ENCODE measurements at regions of chrX and their contacts with region 1.

Region 1: DNA sequence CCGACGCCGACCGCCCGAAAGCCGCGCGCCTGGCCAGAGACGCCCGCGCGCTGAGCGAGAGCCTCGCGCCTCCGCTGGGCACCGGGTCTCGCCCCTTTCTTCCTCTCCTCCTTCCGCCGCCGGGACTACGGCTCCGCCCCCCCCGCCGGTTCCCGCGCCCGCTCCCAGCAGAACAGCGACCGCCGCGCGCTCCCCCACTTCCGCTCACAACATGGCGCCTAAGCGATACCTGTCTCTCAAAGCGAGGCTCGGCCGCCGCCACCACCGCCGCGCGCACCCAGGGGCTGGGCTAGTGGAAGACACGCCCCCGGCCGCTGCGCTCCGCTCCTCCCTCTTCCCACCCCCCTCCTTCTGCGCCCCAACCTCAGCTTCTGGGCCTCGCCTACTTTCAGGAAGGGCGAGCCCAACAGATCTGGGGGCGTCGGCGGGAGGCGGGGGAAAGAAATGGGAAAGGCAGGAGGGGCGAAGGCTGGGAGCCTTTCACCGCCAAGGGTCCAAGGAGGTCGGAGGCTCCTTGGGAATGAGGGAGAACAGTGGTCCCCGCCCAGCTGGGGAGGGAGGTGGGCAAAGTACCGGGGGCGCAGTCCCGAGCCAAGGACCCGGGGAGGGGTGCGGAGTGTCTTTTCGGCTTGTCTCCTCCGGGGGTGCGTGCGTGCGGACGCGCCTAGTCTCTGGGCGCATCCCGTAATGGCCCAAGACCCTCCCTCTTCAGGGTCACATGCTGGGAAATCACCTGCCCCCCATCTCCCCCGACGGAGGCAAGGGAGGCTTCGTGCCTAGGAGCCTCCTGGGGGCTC is at the start of gene RPS6KA3:
- DNase-seq: peak; percentile 83
- H3K4me3 ChIP-seq: peak within 1 kb of the TSS; percentile 69 to 81 (median 73)
- H3K27ac ChIP-seq: peak within 1 kb of the TSS; percentile 75
- H3K4me1 ChIP-seq: peaks cover 23% of the 10 kb centered on the region
- H3K27me3 ChIP-seq: no peaks in the 10 kb centered on the region
- CTCF ChIP-seq: no peak
- POLR2A ChIP-seq: no peak
- total RNA-seq, gene RPS6KA3: 61.6 and 63.6 TPM in 2 replicates

Region 2: DNA sequence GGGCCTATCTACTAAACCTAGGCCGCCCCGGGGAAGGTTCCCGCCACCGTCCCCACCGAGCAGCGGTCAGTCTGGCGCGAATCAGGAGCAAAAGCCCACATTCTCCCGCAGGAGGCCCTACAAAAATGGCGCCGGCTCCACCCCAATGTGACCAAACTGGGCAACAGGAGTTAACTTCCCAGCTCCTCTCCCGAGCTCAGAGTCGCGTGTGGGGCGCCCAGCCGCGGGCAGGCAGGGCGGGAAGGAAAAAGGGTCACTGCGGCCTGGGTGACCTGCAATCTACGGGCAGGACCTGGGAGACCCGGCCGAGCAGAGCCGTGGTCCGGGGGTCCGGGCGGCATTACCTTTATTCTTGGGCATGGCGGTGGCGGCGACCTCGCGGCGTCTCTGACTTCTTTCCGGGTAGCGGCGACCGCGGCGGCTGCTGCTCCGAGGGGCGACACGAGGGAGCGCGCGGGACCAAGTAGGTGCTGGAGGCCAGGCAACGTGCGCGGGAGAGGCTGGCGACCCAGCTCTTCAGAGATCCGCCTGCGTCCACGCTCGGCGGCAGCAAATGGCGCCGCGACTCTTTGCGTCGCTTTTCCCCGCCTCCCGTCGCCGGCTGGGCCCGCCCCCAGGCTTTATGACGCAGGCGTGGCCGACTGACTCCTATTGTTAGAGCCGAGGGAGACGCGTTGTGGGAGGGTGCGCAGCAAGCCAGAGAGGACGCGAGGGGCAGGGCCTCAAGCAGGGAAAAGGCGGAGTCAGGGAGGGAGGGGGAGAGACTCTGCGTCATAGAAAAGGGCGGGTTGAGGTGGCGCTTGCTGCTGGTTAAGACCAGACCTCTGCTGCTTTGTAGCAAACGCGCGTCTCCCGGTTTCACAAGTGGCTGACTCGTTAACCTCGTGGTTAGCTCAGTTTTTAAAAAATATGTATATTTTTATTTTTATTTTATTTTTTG is 125.5 kb before region 1 on chrX and contains the start of gene EIF1AX:
- CTCF ChIA-PET with region 1: no interaction called
- POLR2A ChIA-PET with region 1: no interaction called
- dilution Hi-C with region 1: no loop called
- intact Hi-C with region 1: loop called (anchors 5 kb)
- DNase-seq: peak; percentile 98
- H3K4me3 ChIP-seq: peak within 1 kb of the TSS; percentile 55 to 87 (median 69)
- H3K27ac ChIP-seq: peak within 1 kb of the TSS; percentile 56
- H3K4me1 ChIP-seq: peaks cover 22% of the 10 kb centered on the region
- H3K27me3 ChIP-seq: no peaks in the 10 kb centered on the region
- CTCF ChIP-seq: no peak
- POLR2A ChIP-seq: peak; percentile 46
- total RNA-seq, gene EIF1AX: 89.4 and 94.7 TPM in 2 replicates

Region 3: DNA sequence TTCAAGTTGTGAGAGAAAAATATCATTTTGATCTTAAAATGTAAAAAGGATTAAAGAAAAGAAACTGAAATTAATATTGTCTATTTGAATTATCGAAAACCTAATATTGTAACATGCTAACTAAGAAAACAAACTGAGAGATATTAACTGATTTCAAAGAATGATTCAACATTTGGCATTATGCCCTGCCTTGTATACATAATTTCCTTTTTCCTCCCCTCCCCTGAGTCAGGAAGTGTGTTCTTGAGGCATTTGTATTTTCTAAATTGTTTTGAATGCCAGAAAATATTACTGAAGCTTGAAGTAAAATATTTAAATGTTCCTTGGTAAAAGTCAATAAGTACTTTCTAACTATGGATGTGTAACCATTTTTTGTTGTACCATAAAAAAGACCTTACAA is 49.7 kb before region 1 on chrX:
- CTCF ChIA-PET with region 1: no interaction called
- POLR2A ChIA-PET with region 1: no interaction called
- dilution Hi-C with region 1: no loop called
- intact Hi-C with region 1: loop called (anchors 1 kb)
- DNase-seq: peak; percentile 82
- H3K4me3 ChIP-seq: peak overlapping the region in 2 of 3 experiments; percentile 37 to 95
- H3K27ac ChIP-seq: peak overlapping the region; percentile 78
- H3K4me1 ChIP-seq: peaks cover 24% of the 10 kb centered on the region
- H3K27me3 ChIP-seq: no peaks in the 10 kb centered on the region
- CTCF ChIP-seq: no peak
- POLR2A ChIP-seq: no peak

Region 4: GRCh38 chrX:20230406-20230805 is 36.6 kb before region 1 on chrX:
- CTCF ChIA-PET with region 1: no interaction called
- POLR2A ChIA-PET with region 1: no interaction called
- dilution Hi-C with region 1: no loop called
- intact Hi-C with region 1: no loop called
- DNase-seq: no peak
- H3K4me3 ChIP-seq: no peak overlapping the region
- H3K27ac ChIP-seq: no peak overlapping the region
- H3K4me1 ChIP-seq: no peaks in the 10 kb centered on the region
- H3K27me3 ChIP-seq: no peaks in the 10 kb centered on the region
- CTCF ChIP-seq: no peak
- POLR2A ChIP-seq: no peak

Region 5: DNA sequence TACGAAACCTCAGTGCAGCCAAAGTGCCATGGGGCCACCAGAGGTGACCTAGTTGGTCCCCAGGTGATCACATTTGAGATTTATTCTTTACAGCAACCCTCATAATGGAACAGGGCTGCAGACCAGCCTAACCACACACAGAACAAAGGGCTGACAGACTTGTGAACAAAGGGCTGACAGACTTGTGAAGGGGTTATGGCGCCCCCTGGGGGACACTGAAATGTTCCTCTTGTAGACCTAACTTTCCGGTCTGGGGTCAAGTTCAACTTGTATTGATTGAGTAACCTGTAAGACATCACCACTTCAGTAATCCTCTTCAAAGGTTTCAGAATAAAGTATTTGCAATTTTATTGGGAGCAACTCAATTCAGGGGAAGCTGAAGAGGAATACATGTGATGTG is 175.6 kb after region 1 on chrX:
- CTCF ChIA-PET with region 1: no interaction called
- POLR2A ChIA-PET with region 1: no interaction called
- dilution Hi-C with region 1: no loop called
- intact Hi-C with region 1: loop called (anchors 5 kb)
- DNase-seq: peak; percentile 54
- H3K4me3 ChIP-seq: no peak overlapping the region
- H3K27ac ChIP-seq: no peak overlapping the region
- H3K4me1 ChIP-seq: no peaks in the 10 kb centered on the region
- H3K27me3 ChIP-seq: no peaks in the 10 kb centered on the region
- CTCF ChIP-seq: peak; percentile 43 to 49
- POLR2A ChIP-seq: no peak

Region 6: DNA sequence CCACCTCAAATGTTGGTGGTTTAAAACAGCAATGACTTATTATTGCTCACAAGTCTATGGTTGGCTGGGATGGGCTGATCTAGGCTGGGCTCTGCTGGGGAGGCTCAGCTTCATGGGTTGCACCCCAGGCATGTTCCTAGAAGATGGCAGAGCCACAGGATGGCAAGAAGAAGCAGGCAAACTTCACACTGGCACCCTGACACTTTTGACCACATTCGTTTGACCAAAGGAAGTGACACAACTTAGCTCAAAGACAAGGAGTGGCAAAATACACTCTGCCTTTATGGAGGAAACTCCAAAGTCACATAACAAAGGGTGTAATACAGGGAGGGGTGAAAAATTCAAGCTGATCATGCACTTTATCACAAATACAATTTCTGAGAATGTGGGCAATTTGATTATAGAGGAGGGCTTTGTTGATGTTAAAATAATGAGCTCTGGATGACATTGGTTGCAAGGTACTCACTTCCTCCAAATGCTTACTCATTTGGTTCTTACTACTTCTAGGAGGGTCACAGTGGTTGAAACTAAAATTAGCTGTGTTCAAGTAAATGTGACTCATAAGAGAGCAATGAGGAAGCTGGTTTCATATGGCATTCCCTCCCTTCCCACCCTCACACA is 248.9 kb after region 1 on chrX:
- CTCF ChIA-PET with region 1: no interaction called
- POLR2A ChIA-PET with region 1: no interaction called
- dilution Hi-C with region 1: no loop called
- intact Hi-C with region 1: loop called (anchors 5 kb)
- DNase-seq: peak; percentile 72
- H3K4me3 ChIP-seq: no peak overlapping the region
- H3K27ac ChIP-seq: peak overlapping the region; percentile 71
- H3K4me1 ChIP-seq: peaks cover 53% of the 10 kb centered on the region
- H3K27me3 ChIP-seq: no peaks in the 10 kb centered on the region
- CTCF ChIP-seq: no peak
- POLR2A ChIP-seq: no peak